ENCODE measurements at regions of chr18 and their contacts with region 1.

Region 1: GRCh38 chr18:55343396-55344073 is 244.5 kb downstream of the TCF4 start:
- DNase-seq: no peak
- H3K4me3 ChIP-seq: no peak overlapping the region
- H3K27ac ChIP-seq: no peak overlapping the region
- H3K4me1 ChIP-seq: peaks cover 0 to 11% of the 10 kb centered on the region in 2 donors
- H3K27me3 ChIP-seq: no peaks in the 10 kb centered on the region
- CTCF ChIP-seq: peak; percentile 22 to 67 (median 54)
- POLR2A ChIP-seq: no peak

Region 2: GRCh38 chr18:55415258-55415871 is 71.8 kb after region 1 on chr18:
- intact Hi-C with region 1: loop called in 1 of 2 experiments (anchors 10 kb)
- DNase-seq: peak; percentile 78 to 95 (median 89)
- H3K4me3 ChIP-seq: no peak overlapping the region
- H3K27ac ChIP-seq: no peak overlapping the region
- H3K4me1 ChIP-seq: peaks cover 0 to 4% of the 10 kb centered on the region in 2 donors
- H3K27me3 ChIP-seq: no peaks in the 10 kb centered on the region
- CTCF ChIP-seq: peak; percentile 74 to 97 (median 88)
- POLR2A ChIP-seq: no peak

Region 3: DNA sequence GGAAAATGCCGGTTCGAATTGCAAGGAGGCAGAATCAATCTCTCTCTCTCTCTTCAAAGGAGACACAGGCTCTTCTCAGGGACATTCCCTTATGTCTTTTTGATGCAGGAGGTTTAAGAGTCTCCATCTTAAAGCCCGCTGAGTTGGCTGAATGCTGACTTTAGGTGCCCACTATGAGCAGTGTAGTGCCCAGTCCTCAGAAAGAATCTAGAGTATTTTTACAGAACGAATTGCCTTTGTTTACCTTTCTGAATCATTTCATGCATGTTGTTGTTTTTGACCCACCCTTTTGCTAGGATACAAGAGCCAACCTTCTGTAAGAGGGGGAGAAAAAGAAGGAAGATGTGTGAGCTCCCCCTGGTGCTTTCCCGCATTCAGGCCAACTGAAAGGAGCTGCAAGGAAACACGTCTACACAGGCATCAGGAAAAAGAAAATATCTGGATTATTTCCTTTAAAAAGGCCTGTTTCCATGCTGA is 438.0 kb after region 1 on chr18:
- intact Hi-C with region 1: loop called in 1 of 2 experiments (anchors 10 kb)
- DNase-seq: peak in 5 of 7 donors; percentile 16 to 75 (median 23)
- H3K4me3 ChIP-seq: no peak overlapping the region
- H3K27ac ChIP-seq: no peak overlapping the region
- H3K4me1 ChIP-seq: peaks cover 0 to 6% of the 10 kb centered on the region in 2 donors
- H3K27me3 ChIP-seq: peaks cover 11% of the 10 kb centered on the region
- CTCF ChIP-seq: peak in 4 of 6 experiments; percentile 31 to 51 (median 45)
- POLR2A ChIP-seq: no peak